ENCODE measurements at regions of chr22 and their contacts with region 1.

Region 1: DNA sequence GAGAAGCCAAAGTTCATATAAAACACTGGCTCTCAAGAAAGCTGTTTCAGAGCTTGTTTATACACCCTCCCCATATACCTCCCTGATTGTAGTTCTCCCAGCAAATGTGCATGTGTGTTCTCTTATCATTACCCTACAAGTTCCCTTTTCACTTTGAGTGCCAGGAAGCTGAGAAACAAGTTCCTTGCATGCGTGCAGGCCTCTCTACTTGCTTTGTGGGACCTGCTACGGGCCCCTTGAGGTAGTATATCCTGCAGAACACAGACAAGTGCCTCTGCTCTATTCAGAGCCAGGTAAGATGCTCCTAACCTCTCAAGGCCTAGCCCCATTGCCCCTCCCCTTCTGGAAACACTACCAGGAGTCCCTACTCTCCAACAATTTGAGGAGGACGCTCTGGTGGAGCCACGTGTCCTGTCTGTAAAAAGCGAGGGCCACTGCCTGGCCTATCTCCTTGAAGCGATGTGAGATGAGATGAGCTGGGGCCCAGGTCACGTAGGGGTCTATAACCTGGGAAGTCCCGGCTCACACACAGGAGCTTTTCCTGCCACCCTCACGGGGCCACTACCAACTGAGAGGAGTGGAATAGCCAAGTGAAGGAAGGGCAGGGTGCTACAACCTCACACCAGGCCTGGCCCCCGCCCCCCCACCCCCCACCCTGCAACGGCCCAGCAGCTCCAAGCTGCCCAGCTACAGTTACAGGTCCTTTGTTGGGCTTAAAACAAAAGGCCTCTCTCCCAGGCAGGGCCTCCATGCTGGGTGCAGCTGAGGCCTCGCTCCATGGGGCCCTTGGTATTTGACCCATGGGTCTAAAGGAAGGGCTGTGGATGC is 2.6 kb upstream of the ATP5MGL start:
- DNase-seq: no peak
- ATAC-seq: no peak
- H3K4me3 Mint-ChIP-seq: no peak overlapping the region
- H3K27ac Mint-ChIP-seq: peak overlapping the region; percentile 10
- H3K4me1 Mint-ChIP-seq: peaks cover 31% of the 10 kb centered on the region
- H3K27me3 Mint-ChIP-seq: no peaks in the 10 kb centered on the region

Region 2: GRCh38 chr22:42621505-42622002 is 21.5 kb before region 1 on chr22:
- CTCF ChIA-PET with region 1: interaction called, 11 read pairs
- POLR2A ChIA-PET with region 1: interaction called, 4 read pairs
- DNase-seq: peak; percentile 63
- ATAC-seq: peak; percentile 60
- H3K4me3 Mint-ChIP-seq: no peak overlapping the region
- H3K27ac Mint-ChIP-seq: no peak overlapping the region
- H3K4me1 Mint-ChIP-seq: peaks cover 10% of the 10 kb centered on the region
- H3K27me3 Mint-ChIP-seq: no peaks in the 10 kb centered on the region